Head of caudate nucleus (tissue), 42 donors: ENCODE measurements at regions of chr18 and their contacts with region 1.

Region 1: GRCh38 chr18:26804519-26804918 is 61.0 kb downstream of the AQP4 start:
- DNase-seq: peak in 38 of 42 donors; percentile 16 to 75 (median 39)

Region 2: GRCh38 chr18:26617151-26617554 is 187.4 kb before region 1 on chr18:
- intact Hi-C with region 1: no loop called
- DNase-seq: no peak

Region 3: DNA sequence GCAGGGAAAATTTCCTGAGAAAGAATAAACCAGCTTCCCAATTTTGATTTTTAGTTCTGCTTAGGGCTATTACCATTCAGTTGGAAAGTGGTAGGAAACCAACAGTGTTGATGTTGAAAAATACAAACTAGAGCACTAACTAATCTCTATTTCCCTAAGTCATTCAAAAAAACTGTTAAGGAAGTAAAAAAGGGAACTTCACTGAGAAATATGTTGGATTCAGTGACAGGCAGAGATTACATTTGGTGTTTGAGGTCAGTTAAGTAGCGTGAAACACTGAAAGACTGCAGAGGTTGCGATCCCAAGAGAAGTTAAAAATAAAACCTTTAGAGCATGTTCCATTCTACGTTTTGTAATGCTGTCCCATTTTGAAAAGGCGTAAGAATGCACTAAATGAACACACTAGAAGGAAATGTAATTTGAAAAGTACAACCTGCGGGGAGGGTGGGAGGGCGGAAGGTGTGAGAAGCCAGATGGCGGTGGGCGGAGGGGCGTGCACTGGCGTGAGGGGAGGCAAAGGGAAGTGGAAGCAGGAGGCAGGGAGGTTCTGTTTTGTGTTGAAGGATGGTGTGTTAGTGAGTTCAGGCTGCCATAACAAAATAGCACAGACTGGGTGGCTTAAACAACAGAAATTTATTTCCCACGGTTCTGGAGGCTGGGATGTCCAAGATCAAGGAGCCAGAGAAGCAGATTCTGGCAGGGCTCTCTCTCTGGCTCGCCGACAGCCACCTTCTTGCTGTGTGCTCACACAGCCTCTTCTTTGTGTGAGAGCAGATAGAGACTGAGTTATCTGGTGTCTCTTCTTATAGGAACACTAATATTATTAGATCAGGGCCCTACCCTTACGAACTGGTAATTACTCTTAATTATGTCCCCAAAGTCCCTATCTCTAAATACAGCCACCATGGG is 161.8 kb before region 1 on chr18:
- intact Hi-C with region 1: no loop called
- DNase-seq: peak in 4 of 42 donors; percentile 21 to 49 (median 36)

Region 4: GRCh38 chr18:27005589-27005988 is 201.1 kb after region 1 on chr18:
- intact Hi-C with region 1: loop called (anchors 10 kb)
- DNase-seq: no peak